SK-N-SH (cell line): ENCODE measurements at regions of chrX and their contacts with region 1.

Region 1: GRCh38 chrX:152969548-152969947 is 24.4 kb downstream of the PNMA5 start:
- DNase-seq: no peak
- H3K4me3 ChIP-seq: no peak overlapping the region
- H3K27ac ChIP-seq: no peak overlapping the region
- H3K4me1 ChIP-seq: no peaks in the 10 kb centered on the region
- H3K27me3 ChIP-seq: no peaks in the 10 kb centered on the region; the same call in 1 of the 2 replicates
- CTCF ChIP-seq: no peak
- EP300 ChIP-seq: no peak
- RAD21 ChIP-seq: no peak

Region 2: GRCh38 chrX:152958524-152959465 is 10.8 kb before region 1 on chrX:
- CTCF ChIA-PET with region 1: interaction called, 20 read pairs
- POLR2A ChIA-PET with region 1: no interaction called
- DNase-seq: peak; percentile 87
- H3K4me3 ChIP-seq: no peak overlapping the region; a peak in 2 of 4 replicates
- H3K27ac ChIP-seq: no peak overlapping the region
- H3K4me1 ChIP-seq: no peaks in the 10 kb centered on the region; a peak in 1 of 4 replicates
- H3K27me3 ChIP-seq: no peaks in the 10 kb centered on the region; the same call in 1 of the 2 replicates
- CTCF ChIP-seq: peak; percentile 89
- EP300 ChIP-seq: no peak
- RAD21 ChIP-seq: peak; percentile 93

Region 3: GRCh38 chrX:153381684-153382532 is 412.4 kb after region 1 on chrX:
- CTCF ChIA-PET with region 1: no interaction called
- POLR2A ChIA-PET with region 1: no interaction called
- DNase-seq: peak; percentile 84
- H3K4me3 ChIP-seq: no peak overlapping the region
- H3K27ac ChIP-seq: peak overlapping the region in 1 of 2 experiments; percentile 70; a peak in 1 of 4 replicates
- H3K4me1 ChIP-seq: peaks cover 0 to 3% of the 10 kb centered on the region in 2 experiments; a peak in 1 of 4 replicates
- H3K27me3 ChIP-seq: peaks cover 12% of the 10 kb centered on the region; the same call in 1 of the 2 replicates
- CTCF ChIP-seq: peak; percentile 27; the same call in 1 of the 2 replicates
- EP300 ChIP-seq: 0 out of 4 replicates have a peak, but pooled peaks of 1 of the 2 experiments have one; percentile 13
- RAD21 ChIP-seq: peak; percentile 78